ENCODE measurements at regions of chr4 and their contacts with region 1.

Region 1: GRCh38 chr4:8472689-8473197 is 32.2 kb downstream of the TRMT44 start:
- DNase-seq: peak in 1 of 2 donors; percentile 76
- H3K4me3 ChIP-seq: no peak overlapping the region
- H3K27ac ChIP-seq: peak overlapping the region in 4 of 5 donors; percentile 50 to 76 (median 72)
- H3K4me1 ChIP-seq: peaks cover 6 to 30% (median 19%) of the 10 kb centered on the region in 4 donors
- H3K27me3 ChIP-seq: no peaks in the 10 kb centered on the region
- CTCF ChIP-seq: no peak
- EP300 ChIP-seq: no peak
- POLR2A ChIP-seq: no peak

Region 2: GRCh38 chr4:8547108-8547970 is 74.6 kb after region 1 on chr4:
- intact Hi-C with region 1: loop called (anchors 5 kb)
- DNase-seq: peak in 1 of 2 donors; percentile 49
- H3K4me3 ChIP-seq: no peak overlapping the region
- H3K27ac ChIP-seq: no peak overlapping the region
- H3K4me1 ChIP-seq: peaks cover 0 to 5% (median 0%) of the 10 kb centered on the region in 4 donors
- H3K27me3 ChIP-seq: peaks cover 0 to 14% (median 3%) of the 10 kb centered on the region in 3 donors
- CTCF ChIP-seq: peak in 4 of 7 experiments; percentile 2 to 41 (median 33)
- EP300 ChIP-seq: no peak
- POLR2A ChIP-seq: no peak

Region 3: DNA sequence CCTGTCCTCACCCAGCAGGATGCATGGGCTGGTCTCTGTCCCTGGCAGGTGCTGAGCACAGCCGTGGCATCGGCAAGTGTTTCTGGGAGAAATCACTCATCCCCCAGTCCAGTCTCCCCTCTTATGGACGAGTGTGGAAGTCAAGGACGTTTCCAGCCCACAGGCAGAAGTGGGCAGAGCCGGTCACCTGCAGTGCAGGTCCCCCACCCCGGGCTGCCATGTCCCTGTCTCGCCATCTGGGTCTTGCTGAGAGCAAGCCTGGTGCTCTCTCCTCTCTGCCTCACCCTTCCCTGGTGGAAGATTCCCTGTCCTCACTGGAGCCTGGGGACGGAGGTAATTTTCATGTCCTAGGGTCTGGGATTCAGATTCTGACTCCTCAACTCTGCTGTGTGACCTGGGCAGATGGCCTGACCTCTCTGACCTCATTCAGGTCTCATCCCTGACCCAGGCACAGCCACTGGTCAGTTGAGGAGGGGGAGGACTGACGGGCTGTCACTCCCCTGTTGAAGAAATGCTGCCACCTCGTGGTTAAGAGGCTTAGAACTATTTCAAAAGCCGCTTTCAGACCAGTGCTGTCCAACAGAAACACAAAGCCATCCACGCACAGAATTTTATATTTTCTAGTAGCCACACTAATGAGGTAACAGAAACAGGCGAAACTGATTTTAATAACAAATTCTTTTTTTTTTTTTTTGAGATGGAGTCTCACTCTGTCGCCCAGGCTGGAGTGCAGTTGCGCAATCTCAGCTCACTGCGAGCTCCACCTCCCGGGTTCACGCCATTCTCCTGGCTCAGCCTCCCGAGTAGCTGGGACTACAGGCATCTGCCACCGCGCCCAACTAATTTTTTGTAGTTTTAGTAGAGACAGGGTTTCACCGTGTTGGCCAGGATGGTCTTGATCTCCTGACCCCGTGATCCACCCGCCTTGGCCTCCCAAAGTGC is 121.6 kb after region 1 on chr4:
- intact Hi-C with region 1: loop called (anchors 5 kb)
- DNase-seq: peak; percentile 58 to 87
- H3K4me3 ChIP-seq: no peak overlapping the region
- H3K27ac ChIP-seq: no peak overlapping the region
- H3K4me1 ChIP-seq: peaks cover 0 to 26% (median 12%) of the 10 kb centered on the region in 4 donors
- H3K27me3 ChIP-seq: peaks cover 21 to 68% (median 36%) of the 10 kb centered on the region in 3 donors
- CTCF ChIP-seq: peak in 5 of 7 experiments; percentile 26 to 66 (median 48)
- EP300 ChIP-seq: no peak
- POLR2A ChIP-seq: no peak

Region 4: GRCh38 chr4:8651661-8652180 is 179.0 kb after region 1 on chr4:
- intact Hi-C with region 1: no loop called
- DNase-seq: peak in 1 of 2 donors; percentile 20
- H3K4me3 ChIP-seq: no peak overlapping the region
- H3K27ac ChIP-seq: no peak overlapping the region
- H3K4me1 ChIP-seq: no peaks in the 10 kb centered on the region
- H3K27me3 ChIP-seq: peaks cover 0 to 74% (median 0%) of the 10 kb centered on the region in 3 donors
- CTCF ChIP-seq: no peak
- EP300 ChIP-seq: no peak
- POLR2A ChIP-seq: no peak

Measured in stomach (tissue), 19 donors.